CD4-positive, alpha-beta T cell (primary cell): ENCODE measurements at regions of chr17 and their contacts with region 1.

Region 1: DNA sequence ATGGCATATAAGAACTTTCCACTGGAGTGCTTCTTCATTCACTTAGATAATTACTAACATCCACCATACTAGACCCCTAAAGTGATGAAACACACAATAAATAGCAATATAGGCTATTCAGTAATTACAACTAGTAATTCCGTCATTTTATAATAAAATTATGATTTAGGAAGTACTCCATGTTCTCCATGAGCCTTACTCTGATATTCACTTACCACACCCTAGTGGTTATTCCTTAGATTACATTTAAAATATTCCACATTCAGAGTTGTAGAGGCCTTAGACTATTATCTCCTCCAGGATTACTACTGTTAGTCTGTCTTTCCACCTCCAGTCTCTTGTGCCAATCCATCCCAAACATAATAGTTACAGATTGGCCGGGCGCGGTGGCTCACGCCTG is 62.4 kb downstream of the STH start:
- DNase-seq: peak in 1 of 14 experiments; percentile 22
- ATAC-seq: peak; percentile 46
- H3K4me3 ChIP-seq: no peak overlapping the region
- H3K4me3 Mint-ChIP-seq: no peak overlapping the region
- H3K27ac ChIP-seq: no peak overlapping the region
- H3K27ac Mint-ChIP-seq: peak overlapping the region; percentile 17
- H3K4me1 ChIP-seq: no peaks in the 10 kb centered on the region
- H3K4me1 Mint-ChIP-seq: peaks cover 49% of the 10 kb centered on the region
- H3K27me3 ChIP-seq: no peaks in the 10 kb centered on the region
- H3K27me3 Mint-ChIP-seq: no peaks in the 10 kb centered on the region
- CTCF ChIP-seq: peak; percentile 38

Region 2: GRCh38 chr17:45997624-45998023 is 63.8 kb before region 1 on chr17:
- CTCF ChIA-PET with region 1: no interaction called
- POLR2A ChIA-PET with region 1: no interaction called
- intact Hi-C with region 1: no loop called
- DNase-seq: no peak
- ATAC-seq: no peak
- H3K4me3 ChIP-seq: no peak overlapping the region
- H3K4me3 Mint-ChIP-seq: no peak overlapping the region
- H3K27ac ChIP-seq: no peak overlapping the region
- H3K27ac Mint-ChIP-seq: no peak overlapping the region
- H3K4me1 ChIP-seq: peaks cover 5% of the 10 kb centered on the region
- H3K4me1 Mint-ChIP-seq: no peaks in the 10 kb centered on the region
- H3K27me3 ChIP-seq: no peaks in the 10 kb centered on the region
- H3K27me3 Mint-ChIP-seq: no peaks in the 10 kb centered on the region
- CTCF ChIP-seq: no peak

Region 3: DNA sequence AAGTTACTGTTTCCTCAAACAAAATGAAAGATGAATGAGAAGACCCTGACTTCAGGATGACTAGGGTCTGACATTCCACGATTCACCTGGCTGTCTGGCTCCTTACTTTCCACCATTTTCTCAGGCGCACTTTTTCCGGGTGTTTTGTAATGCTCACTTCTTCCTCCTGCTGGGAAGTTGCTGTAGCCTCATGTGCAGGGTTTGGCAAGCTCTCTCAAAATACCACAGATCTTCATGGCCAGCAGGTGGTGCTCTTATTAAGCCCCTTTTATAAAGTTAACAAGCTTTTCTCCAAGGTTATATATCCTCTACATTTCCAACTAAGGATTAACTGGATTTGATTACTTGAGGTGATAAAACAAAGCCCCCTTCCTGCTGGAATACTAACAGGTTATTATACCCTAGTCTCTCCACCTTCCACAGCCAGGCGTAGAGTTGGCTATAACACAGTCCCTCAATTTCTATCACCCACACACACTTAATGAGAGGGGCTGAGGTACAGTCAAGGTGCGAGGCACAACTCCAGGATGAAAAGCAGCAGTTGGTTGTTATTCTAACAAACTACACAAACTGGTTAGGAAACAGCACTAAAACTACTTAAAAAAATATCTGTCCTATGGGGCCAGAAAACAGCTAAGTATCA is 17.0 kb before region 1 on chr17:
- CTCF ChIA-PET with region 1: interaction called, 11 read pairs
- POLR2A ChIA-PET with region 1: interaction called, 3 read pairs
- intact Hi-C with region 1: no loop called
- DNase-seq: peak in 13 of 14 experiments; percentile 23 to 78 (median 48)
- ATAC-seq: peak; percentile 74
- H3K4me3 ChIP-seq: no peak overlapping the region
- H3K4me3 Mint-ChIP-seq: no peak overlapping the region
- H3K27ac ChIP-seq: no peak overlapping the region
- H3K27ac Mint-ChIP-seq: peak overlapping the region; percentile 54
- H3K4me1 ChIP-seq: no peaks in the 10 kb centered on the region
- H3K4me1 Mint-ChIP-seq: peaks cover 18% of the 10 kb centered on the region
- H3K27me3 ChIP-seq: no peaks in the 10 kb centered on the region
- H3K27me3 Mint-ChIP-seq: no peaks in the 10 kb centered on the region
- CTCF ChIP-seq: peak; percentile 80

Region 4: GRCh38 chr17:46121841-46122485 is 60.5 kb after region 1 on chr17:
- CTCF ChIA-PET with region 1: no interaction called
- POLR2A ChIA-PET with region 1: no interaction called
- intact Hi-C with region 1: loop called in 1 of 2 experiments (anchors 10 kb)
- DNase-seq: no peak
- ATAC-seq: peak; percentile 27
- H3K4me3 ChIP-seq: no peak overlapping the region
- H3K4me3 Mint-ChIP-seq: peak overlapping the region; percentile 26
- H3K27ac ChIP-seq: no peak overlapping the region
- H3K27ac Mint-ChIP-seq: peak overlapping the region; percentile 78
- H3K4me1 ChIP-seq: peaks cover 42% of the 10 kb centered on the region
- H3K4me1 Mint-ChIP-seq: peaks cover 91% of the 10 kb centered on the region
- H3K27me3 ChIP-seq: no peaks in the 10 kb centered on the region
- H3K27me3 Mint-ChIP-seq: no peaks in the 10 kb centered on the region
- CTCF ChIP-seq: no peak